ENCODE measurements at regions of chr2 and their contacts with region 1.

Region 1: DNA sequence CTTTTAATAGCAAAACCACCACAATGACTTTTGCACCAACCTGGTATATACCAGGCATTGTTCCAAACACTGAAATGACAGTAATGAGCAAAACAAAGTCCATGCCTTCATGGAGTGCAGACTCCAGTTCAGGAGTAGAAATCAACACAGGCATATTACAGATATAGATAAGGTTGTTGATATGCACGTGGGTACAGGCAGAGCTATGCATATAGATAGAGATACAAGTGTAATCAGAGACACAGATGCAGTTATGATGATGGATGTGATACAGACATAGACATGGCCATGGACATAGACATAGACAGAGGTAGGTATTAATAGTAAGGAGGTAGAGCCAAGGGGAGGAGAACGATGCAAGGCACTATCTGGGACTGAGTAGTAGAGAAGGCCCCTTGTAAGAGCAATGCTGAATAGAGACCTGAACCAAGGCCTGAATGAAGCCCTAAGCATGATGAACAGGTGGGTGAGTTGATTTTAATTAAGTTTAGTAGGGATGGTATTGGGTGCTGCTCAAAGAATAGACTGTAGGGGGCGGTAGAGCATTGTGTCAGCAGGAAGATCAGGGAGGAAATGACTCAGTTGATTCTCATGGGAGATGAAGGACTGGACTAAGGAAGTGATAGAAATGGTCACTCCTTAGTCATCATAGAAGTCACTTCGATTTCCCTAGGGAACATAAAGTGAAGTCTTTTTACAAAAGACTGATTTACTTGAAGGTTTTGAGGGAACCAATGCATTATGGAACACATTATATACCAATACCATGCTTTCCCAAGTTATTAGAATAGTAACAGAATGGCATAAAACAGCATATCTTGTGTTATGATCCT is 39.4 kb downstream of the CMPK2 start:
- DNase-seq: peak; percentile 48
- H3K4me3 Mint-ChIP-seq: no peak overlapping the region
- H3K27ac Mint-ChIP-seq: no peak overlapping the region
- H3K4me1 Mint-ChIP-seq: peaks cover 13% of the 10 kb centered on the region
- H3K27me3 Mint-ChIP-seq: peaks cover 7% of the 10 kb centered on the region

Region 2: GRCh38 chr2:6865346-6866274 is 39.3 kb after region 1 on chr2 and contains the start of gene CMPK2:
- intact Hi-C with region 1: loop called (anchors 2 kb)
- DNase-seq: peak; percentile 92
- H3K4me3 Mint-ChIP-seq: peak within 1 kb of the TSS; percentile 95
- H3K27ac Mint-ChIP-seq: peak within 1 kb of the TSS; percentile 90
- H3K4me1 Mint-ChIP-seq: peaks cover 40% of the 10 kb centered on the region
- H3K27me3 Mint-ChIP-seq: no peaks in the 10 kb centered on the region
- total RNA-seq, gene CMPK2: 2.8 and 2.9 TPM in 2 replicates

Region 3: DNA sequence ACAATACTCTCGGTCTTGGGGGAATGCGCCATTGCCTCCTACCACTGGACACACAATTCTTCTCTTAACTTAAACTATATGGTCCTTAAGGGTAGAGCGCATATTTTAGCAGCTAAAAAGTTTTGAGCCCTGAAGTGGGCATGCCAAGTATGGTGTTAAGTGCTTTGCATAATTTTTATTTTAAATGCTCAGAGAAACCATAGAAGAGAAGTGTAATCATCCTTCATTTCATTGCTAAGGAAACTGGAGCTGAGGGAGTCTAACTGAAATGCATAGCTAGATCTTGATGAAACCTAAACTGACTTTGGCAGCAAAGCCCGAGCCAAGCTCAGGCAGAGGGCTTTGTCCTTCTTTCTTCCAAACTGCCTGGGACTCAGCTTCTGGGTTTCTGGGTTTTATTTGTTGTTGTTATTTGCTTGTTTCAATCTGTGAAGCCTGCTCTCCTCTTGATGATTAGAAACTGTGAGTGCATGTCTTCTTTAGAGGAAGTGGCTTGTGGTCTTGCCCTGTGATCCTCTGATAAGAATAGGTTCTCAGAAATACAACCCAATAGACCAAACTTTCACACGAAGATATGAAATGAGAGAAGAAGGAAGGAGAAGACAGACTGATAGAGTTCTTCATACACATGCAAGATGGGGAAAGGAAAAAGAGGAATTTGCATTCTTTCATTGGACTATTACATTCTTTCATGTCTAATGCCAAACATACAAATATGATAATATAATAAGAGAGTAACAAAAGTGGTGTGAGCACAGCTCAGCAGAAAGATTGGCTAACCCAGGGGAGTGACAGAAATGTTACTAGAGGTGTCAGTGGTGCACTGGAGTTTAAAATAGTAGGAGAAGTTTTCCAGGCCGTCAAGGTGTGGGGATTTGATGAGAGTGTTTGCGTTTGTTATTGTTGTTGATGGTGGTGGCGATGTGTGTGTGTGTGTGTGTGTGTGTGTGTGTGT is 83.4 kb after region 1 on chr2:
- intact Hi-C with region 1: loop called (anchors 5 kb)
- DNase-seq: peak; percentile 61
- H3K4me3 Mint-ChIP-seq: peak overlapping the region; percentile 44
- H3K27ac Mint-ChIP-seq: peak overlapping the region; percentile 82
- H3K4me1 Mint-ChIP-seq: peaks cover 74% of the 10 kb centered on the region
- H3K27me3 Mint-ChIP-seq: no peaks in the 10 kb centered on the region

Region 4: DNA sequence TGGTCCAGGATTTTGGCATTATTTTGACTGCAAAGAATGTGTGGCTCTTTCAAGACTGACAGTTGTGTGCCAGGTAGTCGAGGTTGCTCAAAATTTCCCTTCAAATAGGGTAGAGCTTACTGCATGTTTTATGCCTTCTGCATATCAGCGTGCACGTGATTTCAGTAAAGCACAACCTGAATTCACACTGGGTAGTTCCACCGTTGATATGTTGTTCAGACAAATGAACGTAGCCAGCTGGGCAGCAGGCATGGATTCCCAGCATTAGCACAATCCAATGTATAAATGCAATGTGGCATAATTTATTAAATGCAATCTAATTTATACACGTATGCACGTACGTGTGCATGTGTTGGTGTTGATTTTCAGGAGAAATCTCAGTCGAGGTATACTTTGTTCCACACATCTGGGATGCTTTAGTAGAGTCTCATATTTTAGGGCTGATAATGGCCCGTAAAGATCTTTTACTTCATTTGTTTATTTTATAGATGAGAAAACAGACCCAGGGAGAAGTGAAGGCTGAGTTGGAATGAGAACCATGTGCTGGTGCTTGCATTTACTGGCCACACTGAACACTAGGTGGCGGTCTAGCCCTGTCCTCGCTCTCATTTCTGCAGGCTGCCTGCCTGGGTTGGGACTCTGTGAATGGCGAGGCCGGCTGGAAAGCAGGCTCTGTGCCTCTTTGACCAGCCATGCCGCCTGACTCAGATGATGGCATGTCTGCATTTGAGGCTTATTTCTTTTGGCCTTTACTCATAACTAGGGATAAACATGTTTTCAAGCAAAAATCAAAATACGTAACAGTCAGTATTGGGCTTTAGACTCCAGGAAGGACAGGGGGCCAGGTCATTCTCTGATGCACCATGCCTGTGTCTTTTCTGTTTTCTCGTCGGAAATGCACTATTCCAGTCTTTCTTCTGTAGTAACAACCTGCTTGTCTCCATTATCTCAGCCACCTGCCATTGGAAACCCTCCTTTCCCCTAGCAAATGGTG is 211.3 kb after region 1 on chr2:
- intact Hi-C with region 1: loop called (anchors 2 kb)
- DNase-seq: peak; percentile 15
- H3K4me3 Mint-ChIP-seq: no peak overlapping the region
- H3K27ac Mint-ChIP-seq: no peak overlapping the region
- H3K4me1 Mint-ChIP-seq: peaks cover 1% of the 10 kb centered on the region
- H3K27me3 Mint-ChIP-seq: no peaks in the 10 kb centered on the region

Region 5: GRCh38 chr2:7044261-7045250 is 218.3 kb after region 1 on chr2:
- intact Hi-C with region 1: loop called (anchors 2 kb)
- DNase-seq: peak; percentile 34
- H3K4me3 Mint-ChIP-seq: no peak overlapping the region
- H3K27ac Mint-ChIP-seq: no peak overlapping the region
- H3K4me1 Mint-ChIP-seq: peaks cover 10% of the 10 kb centered on the region
- H3K27me3 Mint-ChIP-seq: no peaks in the 10 kb centered on the region

Region 6: DNA sequence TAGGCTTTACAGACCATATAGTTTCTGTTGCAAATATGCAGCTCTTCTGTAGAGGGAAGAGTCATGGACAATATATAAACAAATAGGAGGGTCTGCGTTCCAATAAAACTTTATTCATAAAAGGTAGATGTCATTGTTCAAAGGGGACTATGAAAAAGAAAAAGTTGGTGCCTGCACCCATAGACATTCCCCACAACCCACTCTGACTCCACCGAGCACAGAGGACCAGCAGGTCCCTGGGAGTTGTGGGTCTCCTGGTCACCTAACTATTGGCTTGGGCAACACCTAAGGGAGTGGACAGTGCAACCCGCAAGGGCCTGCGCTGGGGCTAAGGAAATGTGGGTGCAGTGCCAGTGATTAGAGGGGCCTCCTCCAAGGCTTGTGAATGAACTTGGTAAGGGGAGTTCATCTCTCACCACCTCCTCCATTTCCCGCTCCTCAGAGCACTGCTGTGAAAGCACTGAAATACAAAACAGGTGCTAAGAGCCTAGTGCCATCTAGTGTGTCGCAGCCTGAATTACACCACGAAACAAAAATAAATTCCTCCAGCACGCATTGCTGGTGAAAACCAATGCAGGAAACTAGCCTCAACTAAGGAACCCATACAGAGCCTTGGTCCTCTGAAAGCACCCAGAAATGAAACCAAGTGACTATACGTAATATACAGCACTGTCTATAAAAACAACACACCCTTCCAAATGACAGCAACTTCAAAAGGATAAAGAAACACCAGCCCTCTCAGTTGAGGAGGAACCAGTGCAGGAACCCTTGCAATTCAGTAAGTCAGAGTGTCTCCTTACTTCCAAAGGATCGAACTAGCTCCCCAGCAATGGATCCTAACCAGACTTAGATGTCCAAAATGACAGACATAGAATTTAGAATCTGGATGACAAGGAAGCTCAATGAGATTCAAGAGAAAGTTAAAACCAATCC is 257.5 kb after region 1 on chr2:
- intact Hi-C with region 1: loop called (anchors 2 kb)
- DNase-seq: no peak
- H3K4me3 Mint-ChIP-seq: no peak overlapping the region
- H3K27ac Mint-ChIP-seq: no peak overlapping the region
- H3K4me1 Mint-ChIP-seq: peaks cover 2% of the 10 kb centered on the region
- H3K27me3 Mint-ChIP-seq: peaks cover 2% of the 10 kb centered on the region

Measured in activated T-helper 2 cell treated with anti-CD3 and anti-CD28 coated beads, Interferon-gamma antibody, Interleukin-2, Interleukin-4, amounts not matched to agents 10 μg/mL and 5 μg/mL and 100 μg/mL, durations not matched to agents 14 hours and 24 hours and 36 hours (primary cell).